SK-N-SH (cell line): ENCODE measurements at regions of chr17 and their contacts with region 1.

Region 1: DNA sequence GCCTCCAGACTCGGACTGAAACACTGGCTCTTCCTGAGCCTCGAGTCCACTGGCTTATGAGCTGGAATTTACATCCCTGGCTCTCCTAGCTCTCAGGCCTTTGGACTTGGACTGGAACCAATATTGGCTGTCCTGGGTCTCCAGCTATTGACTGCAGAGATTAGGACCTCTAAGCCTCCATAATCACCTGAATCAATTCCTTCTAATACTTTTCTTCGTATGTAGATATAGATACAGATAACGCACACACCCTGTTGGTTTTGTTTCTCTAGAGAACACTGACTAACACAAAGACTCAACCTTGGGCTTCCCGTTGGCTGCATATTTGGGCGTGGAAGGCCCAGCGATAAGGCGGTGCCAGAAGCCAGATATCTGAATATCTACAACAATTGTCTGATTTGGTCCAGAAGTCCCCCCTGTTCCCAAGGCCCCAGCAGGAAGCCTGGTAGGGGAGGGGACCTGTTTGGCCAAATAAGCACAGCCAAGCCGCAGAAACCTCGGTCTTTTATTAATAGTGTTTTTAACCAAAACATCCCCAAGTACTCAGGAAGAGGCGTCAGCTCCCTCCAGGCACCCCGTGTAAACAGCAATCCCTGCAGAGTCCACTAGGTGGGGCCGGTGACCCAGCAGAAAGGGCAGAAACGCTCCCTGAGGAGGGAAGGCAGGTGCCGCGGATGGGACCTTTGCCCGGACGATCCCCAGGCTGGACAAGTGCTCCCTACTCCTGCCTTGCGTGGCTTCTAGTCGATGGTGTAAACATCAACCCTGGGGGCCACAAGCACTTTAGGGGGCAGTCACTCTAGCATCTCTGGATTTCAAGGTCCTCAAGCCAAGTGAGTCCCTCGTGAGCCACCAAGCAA is 57.0 kb downstream of the ABR start:
- DNase-seq: peak; percentile 92
- H3K4me3 ChIP-seq: no peak overlapping the region; a peak in 1 of 4 replicates
- H3K27ac ChIP-seq: no peak overlapping the region
- H3K4me1 ChIP-seq: peaks cover 0 to 6% of the 10 kb centered on the region in 2 experiments; a peak in 1 of 4 replicates
- H3K27me3 ChIP-seq: no peaks in the 10 kb centered on the region
- CTCF ChIP-seq: peak; percentile 91
- EP300 ChIP-seq: no peak
- RAD21 ChIP-seq: peak; percentile 87

Region 2: GRCh38 chr17:1055751-1056645 is 66.8 kb before region 1 on chr17:
- CTCF ChIA-PET with region 1: interaction called, 10 read pairs
- POLR2A ChIA-PET with region 1: no interaction called
- DNase-seq: peak; percentile 90
- H3K4me3 ChIP-seq: no peak overlapping the region; a peak in 1 of 4 replicates
- H3K27ac ChIP-seq: no peak overlapping the region
- H3K4me1 ChIP-seq: no peaks in the 10 kb centered on the region; a peak in 1 of 4 replicates
- H3K27me3 ChIP-seq: no peaks in the 10 kb centered on the region
- CTCF ChIP-seq: peak; percentile 71
- EP300 ChIP-seq: no peak
- RAD21 ChIP-seq: peak; percentile 76

Region 3: DNA sequence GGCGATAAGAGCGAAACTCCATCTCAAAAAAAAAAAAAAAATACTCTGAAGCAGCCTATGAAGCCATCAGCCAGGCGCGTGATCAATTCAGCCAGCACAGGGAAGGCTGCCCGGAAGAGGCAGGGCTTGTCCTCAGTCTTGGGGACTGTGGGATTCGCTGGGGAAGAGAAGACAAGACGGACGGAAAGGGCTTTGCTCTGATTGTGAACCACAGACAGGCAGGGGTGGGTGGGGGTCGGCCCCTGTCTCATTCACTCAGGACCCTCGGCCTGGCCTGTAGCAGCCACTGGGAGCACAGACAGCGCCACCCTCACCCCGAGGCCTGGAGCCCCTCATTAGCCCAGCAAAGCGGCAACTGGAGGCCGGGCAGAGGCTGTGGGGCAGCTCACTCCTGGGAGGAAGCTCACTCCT is 19.8 kb after region 1 on chr17:
- CTCF ChIA-PET with region 1: interaction called, 71 read pairs
- POLR2A ChIA-PET with region 1: no interaction called
- DNase-seq: no peak
- H3K4me3 ChIP-seq: no peak overlapping the region
- H3K27ac ChIP-seq: no peak overlapping the region
- H3K4me1 ChIP-seq: peaks cover 4 to 10% of the 10 kb centered on the region in 2 experiments; a peak in 3 of 4 replicates
- H3K27me3 ChIP-seq: no peaks in the 10 kb centered on the region
- CTCF ChIP-seq: no peak
- EP300 ChIP-seq: no peak
- RAD21 ChIP-seq: no peak

Region 4: GRCh38 chr17:1160591-1161041 is 37.9 kb after region 1 on chr17:
- CTCF ChIA-PET with region 1: interaction called, 11 read pairs
- POLR2A ChIA-PET with region 1: no interaction called
- DNase-seq: no peak
- H3K4me3 ChIP-seq: no peak overlapping the region
- H3K27ac ChIP-seq: no peak overlapping the region
- H3K4me1 ChIP-seq: peaks cover 0 to 5% of the 10 kb centered on the region in 2 experiments; a peak in 1 of 4 replicates
- H3K27me3 ChIP-seq: no peaks in the 10 kb centered on the region
- CTCF ChIP-seq: no peak
- EP300 ChIP-seq: no peak
- RAD21 ChIP-seq: no peak

Region 5: GRCh38 chr17:1179818-1180742 is 57.3 kb after region 1 on chr17 and contains the start of gene ABR:
- CTCF ChIA-PET with region 1: interaction called, 248 read pairs
- POLR2A ChIA-PET with region 1: no interaction called
- DNase-seq: peak; percentile 91
- H3K4me3 ChIP-seq: peak within 1 kb of the TSS; percentile 75 to 76
- H3K27ac ChIP-seq: peak within 1 kb of the TSS in 1 of 2 experiments; percentile 48; a peak in 1 of 4 replicates
- H3K4me1 ChIP-seq: peaks cover 0 to 31% of the 10 kb centered on the region in 2 experiments; a peak in 1 of 4 replicates
- H3K27me3 ChIP-seq: no peaks in the 10 kb centered on the region
- CTCF ChIP-seq: no peak
- EP300 ChIP-seq: no peak
- RAD21 ChIP-seq: no peak
- polyA plus RNA-seq, gene ABR: 86.1 and 117 TPM in 2 replicates

Region 6: GRCh38 chr17:1197781-1198490 is 75.2 kb after region 1 on chr17:
- CTCF ChIA-PET with region 1: interaction called, 248 read pairs
- POLR2A ChIA-PET with region 1: no interaction called
- DNase-seq: no peak
- H3K4me3 ChIP-seq: no peak overlapping the region
- H3K27ac ChIP-seq: no peak overlapping the region
- H3K4me1 ChIP-seq: no peaks in the 10 kb centered on the region
- H3K27me3 ChIP-seq: no peaks in the 10 kb centered on the region; the same call in 1 of the 2 replicates
- CTCF ChIP-seq: no peak
- EP300 ChIP-seq: no peak
- RAD21 ChIP-seq: no peak